WTC11 (cell line): ENCODE measurements at regions of chr2 and their contacts with region 1.

Region 1: DNA sequence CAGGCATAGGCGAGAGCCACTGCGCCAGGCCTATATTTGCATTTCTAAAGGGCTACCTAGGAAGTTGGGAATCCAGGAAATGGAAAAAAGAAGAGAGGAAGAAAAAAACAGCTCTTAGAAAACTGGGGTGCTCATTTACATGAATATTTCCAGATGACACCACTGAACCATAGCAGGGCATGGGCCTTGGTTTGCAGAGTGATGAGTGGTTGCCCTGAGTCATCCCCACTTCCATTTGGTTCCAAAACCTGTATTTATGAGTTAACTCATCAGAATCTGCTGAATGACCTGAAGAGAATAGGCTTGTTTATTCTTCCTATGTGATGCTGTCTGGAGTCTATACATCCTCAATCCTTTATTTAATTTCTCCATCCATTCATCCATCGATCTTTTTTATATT is 36.2 kb downstream of the EHD3 start:
- DNase-seq: no peak
- ATAC-seq: peak; percentile 30
- H3K4me3 Mint-ChIP-seq: no peak overlapping the region
- H3K27ac Mint-ChIP-seq: peak overlapping the region; percentile 71; the same call in 1 of the 2 replicates
- H3K4me1 Mint-ChIP-seq: peaks cover 38% of the 10 kb centered on the region
- H3K27me3 Mint-ChIP-seq: no peaks in the 10 kb centered on the region
- CTCF ChIP-seq: no peak

Region 2: DNA sequence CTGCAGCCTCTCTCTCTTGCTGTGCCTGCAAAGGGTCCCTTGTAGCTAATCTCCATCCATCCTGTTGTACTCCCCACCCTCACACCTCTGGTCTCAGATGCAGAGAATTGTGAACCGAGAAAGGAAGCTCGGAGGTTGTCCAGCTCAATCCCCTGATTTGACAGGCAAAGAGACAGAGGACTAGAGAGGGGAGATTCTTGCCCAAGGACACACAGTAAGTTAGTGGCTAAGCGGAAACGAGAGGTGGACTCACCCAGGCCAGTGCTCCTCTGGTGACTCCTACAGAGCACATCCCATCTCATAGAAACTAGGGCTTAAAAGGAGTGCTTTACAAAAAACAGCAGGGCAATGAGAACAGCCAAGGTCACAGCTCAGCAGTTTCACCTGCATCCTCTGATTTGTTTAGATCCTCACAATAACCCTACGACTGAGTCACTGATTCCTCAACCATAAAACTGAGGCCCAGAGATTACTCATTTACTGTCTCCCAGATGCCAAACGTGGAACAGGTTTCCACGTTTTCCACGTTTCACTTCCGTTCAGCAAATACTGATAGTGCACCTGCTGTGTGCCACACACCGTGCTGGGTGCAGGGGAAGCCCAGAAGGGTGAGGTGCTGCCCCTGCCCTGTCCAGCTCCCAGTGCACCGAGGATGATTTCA is 14.1 kb before region 1 on chr2:
- CTCF ChIA-PET with region 1: interaction called, 10 read pairs
- POLR2A ChIA-PET with region 1: no interaction called
- DNase-seq: no peak
- ATAC-seq: no peak
- H3K4me3 Mint-ChIP-seq: no peak overlapping the region
- H3K27ac Mint-ChIP-seq: 0 out of 2 replicates have a peak overlapping the region, but pooled peaks have one; percentile 36
- H3K4me1 Mint-ChIP-seq: peaks cover 40% of the 10 kb centered on the region
- H3K27me3 Mint-ChIP-seq: no peaks in the 10 kb centered on the region
- CTCF ChIP-seq: no peak

Region 3: DNA sequence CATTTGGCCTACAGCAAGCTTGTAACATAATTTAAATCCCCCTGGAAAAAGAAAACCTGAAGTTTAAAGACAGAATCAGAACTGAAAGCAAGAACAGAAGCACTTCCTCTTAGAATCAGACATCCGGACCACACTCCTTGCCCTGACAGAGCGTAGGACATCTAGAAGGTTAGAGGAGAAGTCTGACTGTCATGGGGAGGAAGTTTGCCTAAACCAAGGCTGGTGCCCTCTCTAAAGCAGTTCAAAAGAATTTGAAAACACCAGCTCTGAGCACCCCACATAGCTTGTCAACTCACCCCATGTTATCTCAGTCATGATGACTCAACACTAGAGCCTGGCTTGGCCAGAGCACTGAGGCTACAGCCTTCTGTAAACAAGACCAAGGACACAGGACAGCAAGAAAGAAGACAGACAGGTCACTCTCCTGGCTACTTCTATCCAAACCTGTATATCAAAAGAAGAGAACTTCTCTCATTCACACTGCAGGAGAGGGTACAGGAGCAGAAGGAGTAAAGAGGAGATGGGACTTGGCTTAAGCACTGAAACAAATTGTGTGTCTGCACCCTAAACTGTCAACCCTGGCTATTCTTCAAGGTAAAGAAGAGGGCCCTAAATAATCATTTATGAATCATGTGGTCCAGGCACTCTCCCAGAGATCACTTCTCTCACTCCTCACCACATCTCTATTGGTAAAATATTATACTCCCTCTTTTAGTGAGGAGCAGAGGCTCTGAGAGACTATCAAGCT is 542.1 kb after region 1 on chr2:
- CTCF ChIA-PET with region 1: no interaction called
- POLR2A ChIA-PET with region 1: no interaction called
- DNase-seq: no peak
- ATAC-seq: no peak
- H3K4me3 Mint-ChIP-seq: no peak overlapping the region
- H3K27ac Mint-ChIP-seq: no peak overlapping the region
- H3K4me1 Mint-ChIP-seq: peaks cover 13% of the 10 kb centered on the region
- H3K27me3 Mint-ChIP-seq: no peaks in the 10 kb centered on the region
- CTCF ChIP-seq: no peak

Region 4: DNA sequence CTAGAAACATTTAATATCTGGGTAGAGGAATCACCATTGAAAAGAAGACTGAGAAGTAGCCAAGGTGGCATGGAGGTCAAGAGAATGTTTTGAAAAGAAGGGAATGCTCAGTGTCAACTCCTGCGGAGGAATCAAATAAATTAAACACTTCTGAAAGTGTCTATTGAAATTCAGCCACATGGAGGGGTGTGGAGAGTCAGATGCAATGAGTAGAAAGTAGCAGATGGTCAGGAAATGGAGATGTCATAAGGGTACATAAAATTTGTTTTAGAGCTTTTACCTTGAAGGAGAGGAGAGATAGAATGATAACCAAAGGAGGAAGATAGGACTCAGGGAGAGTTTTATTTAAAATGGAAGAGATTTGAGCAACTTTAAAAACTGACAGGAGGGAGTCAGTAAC is 959.5 kb after region 1 on chr2:
- CTCF ChIA-PET with region 1: no interaction called
- POLR2A ChIA-PET with region 1: no interaction called
- DNase-seq: no peak
- ATAC-seq: no peak
- H3K4me3 Mint-ChIP-seq: no peak overlapping the region
- H3K27ac Mint-ChIP-seq: peak overlapping the region; percentile 19; the same call in 1 of the 2 replicates
- H3K4me1 Mint-ChIP-seq: peaks cover 7% of the 10 kb centered on the region
- H3K27me3 Mint-ChIP-seq: no peaks in the 10 kb centered on the region
- CTCF ChIP-seq: no peak